IMR-90 (cell line): ENCODE measurements at regions of chr2 and their contacts with region 1.

Region 1: GRCh38 chr2:206937555-206937954 is 1.8 kb upstream of the CPO start:
- DNase-seq: no peak
- ATAC-seq: no peak
- H3K4me3 ChIP-seq: no peak overlapping the region
- H3K27ac ChIP-seq: no peak overlapping the region
- H3K4me1 ChIP-seq: no peaks in the 10 kb centered on the region
- H3K27me3 ChIP-seq: no peaks in the 10 kb centered on the region
- CTCF ChIP-seq: no peak
- POLR2A ChIP-seq: no peak
- RAD21 ChIP-seq: no peak

Region 2: DNA sequence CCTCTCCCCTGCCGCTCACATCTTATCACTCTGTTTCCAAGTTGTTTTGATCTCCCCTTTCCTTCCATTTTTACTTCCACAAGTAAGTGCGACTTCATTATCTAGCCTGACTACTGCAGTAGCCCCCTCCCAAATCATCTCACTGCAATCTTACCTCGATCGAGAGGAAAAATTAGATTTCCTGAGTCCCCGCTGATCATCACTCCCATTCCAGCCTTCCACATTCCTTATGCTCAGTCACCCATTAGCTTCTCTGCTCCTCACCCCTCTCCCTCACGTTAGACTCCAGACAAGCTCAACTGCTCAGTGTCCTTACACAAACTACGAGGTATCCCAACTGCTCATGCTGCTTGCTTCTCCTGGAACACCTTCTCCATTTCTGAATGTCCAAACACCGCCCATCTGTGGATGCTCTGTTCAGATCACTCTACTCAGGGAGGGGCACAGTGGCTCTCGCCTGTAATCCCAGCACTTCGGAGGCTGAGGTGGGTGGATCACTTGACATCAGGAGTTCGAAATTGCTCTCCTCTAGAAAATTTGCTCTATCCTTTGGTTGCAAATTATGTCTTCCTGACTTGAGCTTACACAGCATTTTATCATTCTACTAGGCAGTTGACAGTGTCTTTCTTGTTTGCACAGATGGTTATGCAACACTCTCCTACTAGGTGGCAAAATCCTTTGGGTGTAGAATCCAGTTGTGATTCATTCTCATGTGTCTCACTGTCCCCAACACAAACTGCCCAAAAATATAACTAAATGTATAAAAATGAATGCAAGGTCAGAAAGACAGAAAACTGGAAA is 948.1 kb before region 1 on chr2:
- CTCF ChIA-PET with region 1: no interaction called
- POLR2A ChIA-PET with region 1: no interaction called
- dilution Hi-C with region 1: no loop called
- in situ Hi-C with region 1: no loop called
- intact Hi-C with region 1: loop called (anchors 10 kb)
- DNase-seq: no peak
- ATAC-seq: no peak
- H3K4me3 ChIP-seq: no peak overlapping the region
- H3K27ac ChIP-seq: no peak overlapping the region
- H3K4me1 ChIP-seq: no peaks in the 10 kb centered on the region
- H3K27me3 ChIP-seq: no peaks in the 10 kb centered on the region
- CTCF ChIP-seq: no peak
- POLR2A ChIP-seq: no peak
- RAD21 ChIP-seq: no peak

Region 3: GRCh38 chr2:206282746-206283145 is 654.8 kb before region 1 on chr2:
- CTCF ChIA-PET with region 1: no interaction called
- POLR2A ChIA-PET with region 1: no interaction called
- dilution Hi-C with region 1: no loop called
- in situ Hi-C with region 1: no loop called
- intact Hi-C with region 1: no loop called
- DNase-seq: no peak
- ATAC-seq: no peak
- H3K4me3 ChIP-seq: no peak overlapping the region
- H3K27ac ChIP-seq: no peak overlapping the region
- H3K4me1 ChIP-seq: no peaks in the 10 kb centered on the region
- H3K27me3 ChIP-seq: no peaks in the 10 kb centered on the region
- CTCF ChIP-seq: no peak
- POLR2A ChIP-seq: no peak
- RAD21 ChIP-seq: no peak